ENCODE measurements at regions of chr10 and their contacts with region 1.

Region 1: DNA sequence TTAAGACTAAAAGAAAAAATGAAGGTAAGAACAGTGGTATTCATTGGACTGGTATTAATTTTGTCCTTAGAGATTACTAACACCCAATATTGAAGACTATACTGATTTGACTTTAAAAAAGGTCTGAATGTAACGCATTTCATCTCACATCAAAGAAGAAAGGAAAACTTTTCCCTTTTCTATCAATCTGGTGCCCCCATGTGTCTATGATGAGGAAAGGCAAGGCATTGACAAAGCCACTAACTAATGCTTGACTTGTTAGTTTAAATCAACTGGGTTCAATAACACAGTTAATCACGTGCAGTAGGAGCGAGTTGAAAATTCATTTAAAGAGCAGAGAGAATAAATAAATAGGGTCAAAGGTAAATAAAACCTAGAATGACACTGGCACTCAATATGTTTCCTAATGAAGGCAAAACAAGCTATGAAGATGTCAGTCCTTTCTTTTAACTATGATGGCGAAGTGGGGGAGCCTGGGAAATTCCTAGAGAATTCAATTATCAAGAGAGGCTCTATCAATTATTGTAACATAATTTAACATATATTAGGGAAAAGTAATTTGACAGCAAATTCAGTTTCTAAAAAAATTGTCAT is 180.9 kb downstream of the ANK3 start:
- DNase-seq: no peak
- H3K4me3 ChIP-seq: no peak overlapping the region
- H3K27ac ChIP-seq: no peak overlapping the region
- H3K4me1 ChIP-seq: peaks cover 0 to 11% of the 10 kb centered on the region in 2 donors
- H3K27me3 ChIP-seq: no peaks in the 10 kb centered on the region
- CTCF ChIP-seq: peak; percentile 61 to 84 (median 77)

Region 2: GRCh38 chr10:59926086-59926485 is 282.7 kb before region 1 on chr10:
- intact Hi-C with region 1: no loop called
- DNase-seq: no peak
- H3K4me3 ChIP-seq: no peak overlapping the region
- H3K27ac ChIP-seq: no peak overlapping the region
- H3K4me1 ChIP-seq: no peaks in the 10 kb centered on the region
- H3K27me3 ChIP-seq: no peaks in the 10 kb centered on the region
- CTCF ChIP-seq: no peak

Region 3: GRCh38 chr10:60252688-60253087 is 43.9 kb after region 1 on chr10:
- intact Hi-C with region 1: no loop called
- DNase-seq: no peak
- H3K4me3 ChIP-seq: no peak overlapping the region
- H3K27ac ChIP-seq: no peak overlapping the region
- H3K4me1 ChIP-seq: no peaks in the 10 kb centered on the region
- H3K27me3 ChIP-seq: no peaks in the 10 kb centered on the region
- CTCF ChIP-seq: no peak

Region 4: GRCh38 chr10:60282771-60283353 is 74.1 kb after region 1 on chr10:
- intact Hi-C with region 1: no loop called
- DNase-seq: no peak
- H3K4me3 ChIP-seq: no peak overlapping the region
- H3K27ac ChIP-seq: peak overlapping the region; percentile 2 to 48
- H3K4me1 ChIP-seq: peaks cover 0 to 6% of the 10 kb centered on the region in 2 donors
- H3K27me3 ChIP-seq: no peaks in the 10 kb centered on the region
- CTCF ChIP-seq: no peak

Region 5: GRCh38 chr10:60434418-60435046 is 225.8 kb after region 1 on chr10:
- intact Hi-C with region 1: loop called (anchors 5 kb)
- DNase-seq: no peak
- H3K4me3 ChIP-seq: no peak overlapping the region
- H3K27ac ChIP-seq: no peak overlapping the region
- H3K4me1 ChIP-seq: peaks cover 0 to under 1% of the 10 kb centered on the region in 2 donors
- H3K27me3 ChIP-seq: no peaks in the 10 kb centered on the region
- CTCF ChIP-seq: peak; percentile 65 to 75 (median 70)